ENCODE measurements at regions of chr1 and their contacts with region 1.

Region 1: GRCh38 chr1:44819608-44820327 is 11.4 kb downstream of the BTBD19 start:
- DNase-seq: peak; percentile 95
- H3K4me3 ChIP-seq: peak overlapping the region; percentile 67
- H3K27ac ChIP-seq: peak overlapping the region; percentile 93
- H3K4me1 ChIP-seq: peaks cover 36% of the 10 kb centered on the region
- CTCF ChIP-seq: no peak

Region 2: GRCh38 chr1:44696789-44697345 is 122.9 kb before region 1 on chr1:
- CTCF ChIA-PET with region 1: no interaction called
- POLR2A ChIA-PET with region 1: interaction called, 11 read pairs
- intact Hi-C with region 1: no loop called
- DNase-seq: peak; percentile 73
- H3K4me3 ChIP-seq: peak overlapping the region; percentile 25
- H3K27ac ChIP-seq: peak overlapping the region; percentile 80
- H3K4me1 ChIP-seq: peaks cover 57% of the 10 kb centered on the region
- CTCF ChIP-seq: no peak

Region 3: DNA sequence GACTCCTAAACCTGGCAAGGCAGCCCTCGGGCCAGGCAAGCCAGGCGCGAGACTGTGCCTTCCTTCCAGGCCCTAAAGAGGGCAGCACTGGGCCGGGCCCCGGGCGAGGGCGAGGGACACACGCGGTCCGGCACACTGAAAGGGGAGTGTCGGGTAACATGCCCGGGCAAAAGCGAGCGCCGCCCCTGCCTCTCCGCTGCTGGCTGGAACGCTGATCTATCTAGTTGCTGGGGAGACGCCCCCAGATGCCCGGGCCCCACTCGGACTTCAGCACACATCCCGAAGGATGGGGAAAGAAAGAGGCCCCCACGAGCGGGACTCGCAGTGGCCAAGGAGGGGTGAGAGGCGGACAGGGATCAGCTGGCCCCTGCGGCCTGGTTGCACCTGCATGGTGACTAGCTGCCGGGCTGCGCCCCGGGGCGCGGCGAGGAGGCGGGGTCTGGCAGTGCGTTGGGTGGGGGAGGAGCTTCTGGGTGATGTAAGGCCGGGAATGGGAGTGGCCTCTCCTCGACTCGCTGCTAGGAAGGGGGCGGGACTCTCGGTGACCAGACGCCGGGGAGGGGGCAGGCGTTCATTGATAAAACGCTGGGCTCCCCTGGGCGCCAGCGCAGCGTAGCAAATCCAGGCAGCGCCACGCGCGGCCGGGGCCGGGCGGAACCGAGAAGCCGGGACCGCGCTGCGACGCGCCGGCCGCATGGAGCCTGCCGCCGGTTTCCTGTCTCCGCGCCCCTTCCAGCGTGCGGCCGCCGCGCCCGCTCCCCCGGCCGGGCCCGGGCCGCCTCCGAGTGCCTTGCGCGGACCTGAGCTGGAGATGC is 19.8 kb before region 1 on chr1 and contains the start of gene PLK3:
- CTCF ChIA-PET with region 1: interaction called, 7 read pairs
- POLR2A ChIA-PET with region 1: interaction called, 14 read pairs
- intact Hi-C with region 1: loop called (anchors 2 kb)
- DNase-seq: peak; percentile 98
- H3K4me3 ChIP-seq: peak within 1 kb of the TSS; percentile 83
- H3K27ac ChIP-seq: peak within 1 kb of the TSS; percentile 67
- H3K4me1 ChIP-seq: peaks cover 30% of the 10 kb centered on the region
- CTCF ChIP-seq: peak; percentile 84
- total RNA-seq, gene PLK3: 8.3 and 10.1 TPM in 2 replicates

Region 4: GRCh38 chr1:44807262-44808062 is 12.3 kb before region 1 on chr1 and contains the start of gene DYNLT4:
- CTCF ChIA-PET with region 1: interaction called, 6 read pairs
- POLR2A ChIA-PET with region 1: interaction called, 54 read pairs
- intact Hi-C with region 1: no loop called
- DNase-seq: peak; percentile 68
- H3K4me3 ChIP-seq: no peak within 1 kb of the TSS
- H3K27ac ChIP-seq: peak within 1 kb of the TSS; percentile 74
- H3K4me1 ChIP-seq: peaks cover 44% of the 10 kb centered on the region
- CTCF ChIP-seq: no peak
- total RNA-seq, gene DYNLT4: 1.5 TPM in 1 of 2 replicates, not detected in the other

Region 5: DNA sequence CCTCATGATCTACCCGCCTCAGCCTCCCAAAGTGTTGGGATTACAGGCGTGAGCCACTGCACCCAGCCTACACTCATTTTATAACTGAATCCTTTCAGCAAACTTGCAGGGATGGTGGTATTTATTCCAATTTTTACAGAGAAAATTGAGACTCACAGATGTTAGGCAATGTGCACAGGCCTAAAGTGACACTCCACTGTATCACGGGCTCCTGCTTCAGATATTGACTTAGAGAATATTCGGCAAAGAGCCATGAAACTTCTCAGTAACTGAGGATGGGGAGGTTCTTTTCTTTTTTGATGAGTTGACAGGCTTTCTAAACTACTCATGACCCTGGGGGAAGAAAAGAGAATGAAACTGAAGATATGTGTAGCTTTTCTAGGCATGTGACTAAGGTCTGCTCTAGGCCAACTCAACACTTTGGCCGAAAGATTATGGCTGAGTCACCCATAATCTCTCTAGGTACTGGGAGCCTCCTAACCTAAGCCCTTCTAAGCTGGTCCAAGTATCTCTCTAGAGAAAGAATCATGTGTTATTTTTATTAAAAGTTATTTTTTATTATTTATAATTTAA is 43.1 kb after region 1 on chr1:
- CTCF ChIA-PET with region 1: no interaction called
- POLR2A ChIA-PET with region 1: no interaction called
- intact Hi-C with region 1: no loop called
- DNase-seq: no peak
- H3K4me3 ChIP-seq: no peak overlapping the region
- H3K27ac ChIP-seq: no peak overlapping the region
- H3K4me1 ChIP-seq: peaks cover 10% of the 10 kb centered on the region
- CTCF ChIP-seq: no peak

Region 6: DNA sequence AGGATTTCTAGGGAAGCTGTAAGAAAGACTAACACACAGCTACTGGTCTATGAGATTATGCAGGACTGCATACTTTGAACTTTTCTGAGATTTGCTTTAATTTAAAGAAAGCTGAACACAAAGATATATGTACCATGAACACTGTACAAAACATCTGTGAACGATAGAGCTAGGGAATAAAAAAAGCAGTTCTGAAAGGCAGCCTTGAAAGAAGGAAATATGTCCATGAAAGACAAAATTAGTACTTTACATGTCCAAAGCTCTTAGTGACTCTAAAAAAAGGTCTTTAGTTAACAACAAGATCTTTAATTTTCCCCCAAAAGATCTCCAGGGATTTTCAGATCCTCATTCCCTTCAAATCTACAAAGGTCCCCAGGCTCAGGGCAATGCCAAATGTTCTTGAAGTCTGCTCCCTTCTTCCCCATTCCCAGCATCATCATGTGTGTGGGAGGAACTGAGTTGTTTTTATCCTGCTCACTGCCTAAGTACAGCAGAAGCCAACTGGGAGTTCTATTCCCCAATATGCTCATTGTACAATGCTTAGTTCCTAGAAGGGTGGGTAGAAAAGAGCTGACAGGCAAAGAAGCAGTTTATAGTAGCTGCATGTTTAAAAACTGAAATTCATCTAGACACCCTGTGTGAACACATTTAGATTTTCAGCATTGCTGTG is 83.4 kb after region 1 on chr1:
- CTCF ChIA-PET with region 1: no interaction called
- POLR2A ChIA-PET with region 1: no interaction called
- intact Hi-C with region 1: no loop called
- DNase-seq: no peak
- H3K4me3 ChIP-seq: no peak overlapping the region
- H3K27ac ChIP-seq: no peak overlapping the region
- H3K4me1 ChIP-seq: no peaks in the 10 kb centered on the region
- CTCF ChIP-seq: no peak

Region 7: GRCh38 chr1:45172024-45172423 is 352.3 kb after region 1 on chr1:
- CTCF ChIA-PET with region 1: no interaction called
- POLR2A ChIA-PET with region 1: no interaction called
- intact Hi-C with region 1: no loop called
- DNase-seq: no peak
- H3K4me3 ChIP-seq: no peak overlapping the region
- H3K27ac ChIP-seq: no peak overlapping the region
- H3K4me1 ChIP-seq: no peaks in the 10 kb centered on the region
- CTCF ChIP-seq: no peak

Measured in OCI-LY7 (cell line).